ENCODE measurements at regions of chr5 and their contacts with region 1.

Region 1: DNA sequence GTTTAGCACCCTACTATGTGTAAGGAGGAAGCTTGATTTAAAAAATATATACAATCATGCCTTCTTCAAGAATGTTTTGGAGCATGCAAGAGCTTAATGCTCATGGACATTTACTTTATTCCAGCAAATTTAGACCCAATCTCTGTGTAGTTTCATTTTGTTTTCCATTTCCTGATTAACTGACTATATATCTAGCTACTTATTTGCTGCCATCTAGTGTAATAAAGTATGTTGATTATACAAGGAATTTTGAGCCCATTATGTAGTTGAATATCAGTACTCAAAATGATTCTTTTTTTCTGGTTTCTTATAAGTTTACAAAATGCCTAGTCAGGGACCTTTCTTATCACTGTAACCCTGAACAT is 100.0 kb upstream of the CCDC152 start:
- DNase-seq: no peak
- ATAC-seq: peak in 2 of 4 donors; percentile 49 to 64
- H3K4me3 ChIP-seq: peak overlapping the region in 8 of 12 donors; percentile 1 to 47 (median 26)
- H3K27ac ChIP-seq: no peak overlapping the region
- H3K4me1 ChIP-seq: peaks cover 0 to 29% (median 14%) of the 10 kb centered on the region in 12 donors
- H3K27me3 ChIP-seq: no peaks in the 10 kb centered on the region
- CTCF ChIP-seq: peak in 10 of 12 donors; percentile 10 to 63 (median 40)
- POLR2A ChIP-seq: no peak

Region 2: GRCh38 chr5:42514754-42515153 is 141.9 kb before region 1 on chr5:
- intact Hi-C with region 1: loop called in 1 of 10 experiments (anchors 10 kb)
- DNase-seq: no peak
- ATAC-seq: peak in 2 of 4 donors; percentile 17 to 54
- H3K4me3 ChIP-seq: no peak overlapping the region
- H3K27ac ChIP-seq: no peak overlapping the region
- H3K4me1 ChIP-seq: peaks cover 0 to 47% (median 9%) of the 10 kb centered on the region in 12 donors
- H3K27me3 ChIP-seq: no peaks in the 10 kb centered on the region
- CTCF ChIP-seq: peak in 4 of 12 donors; percentile 15 to 37 (median 24)
- POLR2A ChIP-seq: no peak

Region 3: DNA sequence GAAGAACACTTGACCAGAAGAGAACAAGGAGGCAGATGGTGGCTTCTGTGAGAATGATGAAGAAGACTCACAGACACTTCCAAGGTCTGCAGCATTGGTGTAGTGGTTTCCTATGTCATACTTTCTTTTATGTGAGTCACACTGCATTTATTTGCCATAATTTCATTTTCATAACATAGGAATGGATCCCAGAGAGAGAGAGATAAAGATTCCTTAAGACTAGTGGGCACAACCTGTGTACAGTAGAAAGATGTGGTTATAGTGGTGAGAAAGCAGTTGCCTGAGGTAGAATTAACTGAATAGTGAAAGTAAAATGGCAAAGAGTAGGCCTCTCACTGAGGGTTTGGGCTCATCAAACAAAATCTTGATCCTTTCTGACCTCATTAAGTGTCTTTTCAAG is 92.4 kb after region 1 on chr5:
- intact Hi-C with region 1: no loop called
- DNase-seq: no peak
- ATAC-seq: no peak
- H3K4me3 ChIP-seq: no peak overlapping the region
- H3K27ac ChIP-seq: no peak overlapping the region
- H3K4me1 ChIP-seq: no peaks in the 10 kb centered on the region
- H3K27me3 ChIP-seq: no peaks in the 10 kb centered on the region
- CTCF ChIP-seq: no peak
- POLR2A ChIP-seq: no peak

Measured in heart left ventricle (tissue), 16 donors.